ENCODE measurements at regions of chr1 and their contacts with region 1.

Region 1: GRCh38 chr1:149949911-149950310 is 13.2 kb upstream of the MTMR11 start:
- DNase-seq: no peak
- H3K4me3 ChIP-seq: no peak overlapping the region
- H3K27ac ChIP-seq: no peak overlapping the region
- H3K4me1 ChIP-seq: no peaks in the 10 kb centered on the region
- H3K27me3 ChIP-seq: no peaks in the 10 kb centered on the region
- CTCF ChIP-seq: no peak

Region 2: DNA sequence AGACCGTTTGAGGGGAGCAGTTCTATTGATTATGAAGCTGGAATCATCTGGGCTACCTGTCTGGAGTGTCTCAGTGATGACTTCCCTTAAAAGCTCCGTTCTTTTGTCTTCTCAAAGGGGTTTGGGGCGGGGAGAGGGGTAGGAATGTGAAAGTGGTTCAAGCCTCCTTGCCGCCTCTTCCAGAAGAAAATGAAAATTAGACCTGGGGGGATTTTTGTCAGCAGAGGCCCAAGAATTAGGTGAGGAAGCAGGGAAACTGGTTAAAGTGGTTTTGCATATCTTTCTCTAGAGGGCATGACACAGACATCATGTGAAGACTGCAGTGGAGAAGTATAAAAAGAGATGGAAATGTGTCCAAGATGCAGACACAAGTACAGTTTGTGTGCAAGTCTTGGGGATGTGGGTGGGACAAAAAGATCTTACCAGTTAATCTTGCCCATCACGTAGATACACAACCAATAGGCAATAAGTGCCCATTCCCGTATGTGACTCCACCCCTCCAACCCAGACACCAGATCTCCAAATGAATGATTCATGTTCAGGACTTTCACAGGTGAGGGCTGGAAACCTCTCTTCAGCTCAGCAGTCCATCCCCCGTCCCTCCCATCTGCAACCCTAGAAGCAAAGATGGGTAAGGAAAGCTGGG is 12.7 kb before region 1 on chr1:
- CTCF ChIA-PET with region 1: no interaction called
- POLR2A ChIA-PET with region 1: interaction called, 19 read pairs
- intact Hi-C with region 1: no loop called
- DNase-seq: peak; percentile 80 to 92
- H3K4me3 ChIP-seq: peak overlapping the region; percentile 81
- H3K27ac ChIP-seq: peak overlapping the region; percentile 95
- H3K4me1 ChIP-seq: peaks cover 40% of the 10 kb centered on the region
- H3K27me3 ChIP-seq: no peaks in the 10 kb centered on the region
- CTCF ChIP-seq: 0 out of 2 replicates have a peak, but pooled peaks have one; percentile 16

Region 3: DNA sequence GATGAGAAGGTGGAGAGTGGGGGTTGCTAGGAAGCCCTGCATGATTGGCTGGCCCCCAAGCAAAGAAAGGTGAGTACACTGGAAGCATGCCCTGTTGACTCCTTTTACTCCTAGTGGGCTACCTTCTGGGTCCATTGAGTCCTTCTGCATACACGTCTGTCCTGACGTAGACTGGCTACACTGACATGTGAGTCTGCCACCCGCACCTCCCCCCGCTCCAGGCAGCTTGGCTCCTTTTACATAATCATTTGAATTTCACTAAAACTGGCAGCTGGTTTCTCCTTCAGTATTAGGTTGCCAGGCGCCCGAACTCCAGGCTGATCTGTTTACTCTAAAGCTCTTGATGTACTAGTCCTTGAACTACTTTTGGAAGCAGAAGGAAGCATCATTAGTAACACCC is 352.4 kb after region 1 on chr1:
- CTCF ChIA-PET with region 1: no interaction called
- POLR2A ChIA-PET with region 1: no interaction called
- intact Hi-C with region 1: no loop called
- DNase-seq: no peak
- H3K4me3 ChIP-seq: no peak overlapping the region
- H3K27ac ChIP-seq: no peak overlapping the region
- H3K4me1 ChIP-seq: no peaks in the 10 kb centered on the region
- H3K27me3 ChIP-seq: no peaks in the 10 kb centered on the region
- CTCF ChIP-seq: no peak

Measured in PC-9 (cell line).